ENCODE measurements at regions of chr10 and their contacts with region 1.

Region 1: DNA sequence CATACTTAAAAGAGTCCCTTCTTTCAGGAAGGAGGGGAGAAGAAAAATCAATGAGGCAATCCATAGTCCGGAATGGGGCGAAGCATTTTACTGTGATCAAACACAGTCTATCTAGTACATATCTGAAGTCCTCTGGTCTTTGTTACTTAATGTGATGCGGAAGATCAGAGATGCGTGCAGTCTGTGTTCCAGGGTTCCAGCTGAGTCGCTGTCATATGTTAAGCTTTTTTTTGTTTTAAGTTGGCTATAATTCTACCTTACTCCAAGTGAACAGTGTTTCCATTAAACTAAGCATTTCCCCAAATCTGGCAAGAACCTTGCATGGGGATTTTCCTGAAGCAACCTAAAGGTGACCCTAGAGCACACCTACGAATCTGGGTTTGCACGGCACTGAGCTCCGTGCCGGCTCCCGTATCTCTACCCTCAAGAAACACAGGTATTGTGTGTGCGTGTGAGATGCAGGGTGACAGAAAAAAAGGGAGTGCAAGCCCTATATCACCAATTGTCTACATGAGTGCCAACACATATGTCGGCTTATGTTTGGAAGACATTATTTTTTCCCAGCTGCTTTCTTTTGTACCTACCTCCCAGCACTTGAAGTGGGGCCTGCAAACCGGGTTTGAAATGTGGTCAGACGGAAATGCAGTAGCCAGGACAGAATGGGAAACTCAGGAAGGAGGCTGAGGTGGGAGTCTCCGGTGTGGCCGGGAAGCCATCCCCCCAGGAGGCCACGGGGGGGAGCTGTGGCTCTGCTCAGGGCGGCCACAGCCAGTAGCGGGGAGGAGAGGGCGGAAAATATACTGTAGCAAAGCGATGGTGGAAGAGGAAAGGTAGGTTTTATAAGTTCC is 435.8 kb upstream of the MGMT start:
- DNase-seq: peak in 13 of 14 experiments; percentile 20 to 76 (median 42)
- ATAC-seq: peak; percentile 45
- H3K4me3 ChIP-seq: no peak overlapping the region
- H3K4me3 Mint-ChIP-seq: no peak overlapping the region
- H3K27ac ChIP-seq: no peak overlapping the region
- H3K27ac Mint-ChIP-seq: no peak overlapping the region
- H3K4me1 ChIP-seq: peaks cover 11% of the 10 kb centered on the region
- H3K4me1 Mint-ChIP-seq: peaks cover 37% of the 10 kb centered on the region
- H3K27me3 ChIP-seq: no peaks in the 10 kb centered on the region
- H3K27me3 Mint-ChIP-seq: peaks cover 28% of the 10 kb centered on the region
- CTCF ChIP-seq: peak; percentile 82

Region 2: DNA sequence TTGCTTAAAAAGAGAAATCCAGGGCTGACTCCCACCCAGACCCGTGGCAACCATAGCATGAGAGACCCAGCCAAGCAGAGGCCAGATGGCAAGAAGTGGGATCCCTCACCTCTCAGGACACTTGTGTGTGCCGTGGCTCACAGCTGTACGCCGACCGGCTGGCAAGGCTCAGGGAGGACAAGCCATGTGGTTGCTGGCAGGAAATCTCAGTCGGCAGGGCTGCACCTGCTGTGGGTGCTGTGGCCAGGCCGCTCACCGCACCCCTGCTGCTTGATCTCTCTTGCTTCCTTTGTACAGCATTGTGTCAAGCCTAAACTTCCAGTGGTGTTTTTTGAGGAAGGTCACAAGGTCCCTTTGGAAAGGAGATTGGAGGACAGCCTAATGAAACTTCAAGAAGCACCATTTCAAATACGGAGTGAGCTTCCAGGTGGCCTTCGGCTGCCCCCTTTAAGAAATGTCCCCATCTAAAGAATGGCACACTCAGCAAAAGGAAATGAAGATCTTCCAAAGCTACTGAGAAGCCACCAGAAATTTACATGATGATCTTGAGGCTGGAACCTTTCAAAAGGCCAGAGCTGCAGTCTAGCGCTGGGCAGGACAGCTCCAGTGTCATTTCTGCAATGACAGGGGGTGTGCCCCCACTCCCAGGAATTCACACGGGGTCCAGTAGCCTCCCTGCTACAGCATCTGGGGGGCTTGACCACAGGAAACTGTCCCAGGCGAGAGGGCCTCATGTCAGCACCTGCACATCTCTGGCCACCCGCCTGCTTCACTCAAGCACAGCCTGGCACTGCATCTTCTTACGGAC is 26.8 kb after region 1 on chr10:
- CTCF ChIA-PET with region 1: no interaction called
- POLR2A ChIA-PET with region 1: interaction called, 18 read pairs
- intact Hi-C with region 1: no loop called
- DNase-seq: peak in 11 of 14 experiments; percentile 14 to 71 (median 49)
- ATAC-seq: peak; percentile 90
- H3K4me3 ChIP-seq: no peak overlapping the region
- H3K4me3 Mint-ChIP-seq: peak overlapping the region; percentile 64
- H3K27ac ChIP-seq: no peak overlapping the region
- H3K27ac Mint-ChIP-seq: peak overlapping the region; percentile 65
- H3K4me1 ChIP-seq: peaks cover 32% of the 10 kb centered on the region
- H3K4me1 Mint-ChIP-seq: peaks cover 40% of the 10 kb centered on the region
- H3K27me3 ChIP-seq: no peaks in the 10 kb centered on the region
- H3K27me3 Mint-ChIP-seq: no peaks in the 10 kb centered on the region
- CTCF ChIP-seq: no peak

Region 3: DNA sequence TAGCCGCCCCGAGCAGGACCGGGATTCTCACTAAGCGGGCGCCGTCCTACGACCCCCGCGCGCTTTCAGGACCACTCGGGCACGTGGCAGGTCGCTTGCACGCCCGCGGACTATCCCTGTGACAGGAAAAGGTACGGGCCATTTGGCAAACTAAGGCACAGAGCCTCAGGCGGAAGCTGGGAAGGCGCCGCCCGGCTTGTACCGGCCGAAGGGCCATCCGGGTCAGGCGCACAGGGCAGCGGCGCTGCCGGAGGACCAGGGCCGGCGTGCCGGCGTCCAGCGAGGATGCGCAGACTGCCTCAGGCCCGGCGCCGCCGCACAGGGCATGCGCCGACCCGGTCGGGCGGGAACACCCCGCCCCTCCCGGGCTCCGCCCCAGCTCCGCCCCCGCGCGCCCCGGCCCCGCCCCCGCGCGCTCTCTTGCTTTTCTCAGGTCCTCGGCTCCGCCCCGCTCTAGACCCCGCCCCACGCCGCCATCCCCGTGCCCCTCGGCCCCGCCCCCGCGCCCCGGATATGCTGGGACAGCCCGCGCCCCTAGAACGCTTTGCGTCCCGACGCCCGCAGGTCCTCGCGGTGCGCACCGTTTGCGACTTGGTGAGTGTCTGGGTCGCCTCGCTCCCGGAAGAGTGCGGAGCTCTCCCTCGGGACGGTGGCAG is 435.6 kb after region 1 on chr10 and contains the start of gene MGMT:
- CTCF ChIA-PET with region 1: no interaction called
- POLR2A ChIA-PET with region 1: interaction called, 7 read pairs
- intact Hi-C with region 1: loop called in 1 of 2 experiments (anchors 10 kb)
- DNase-seq: peak; percentile 95 to 100 (median 99)
- ATAC-seq: peak; percentile 98
- H3K4me3 ChIP-seq: peak within 1 kb of the TSS; percentile 78
- H3K4me3 Mint-ChIP-seq: peak within 1 kb of the TSS; percentile 93
- H3K27ac ChIP-seq: peak within 1 kb of the TSS; percentile 58
- H3K27ac Mint-ChIP-seq: peak within 1 kb of the TSS; percentile 90
- H3K4me1 ChIP-seq: peaks cover 21% of the 10 kb centered on the region
- H3K4me1 Mint-ChIP-seq: peaks cover 22% of the 10 kb centered on the region
- H3K27me3 ChIP-seq: no peaks in the 10 kb centered on the region
- H3K27me3 Mint-ChIP-seq: no peaks in the 10 kb centered on the region
- CTCF ChIP-seq: no peak
- total RNA-seq, gene MGMT: 9.0 to 9.6 TPM

Region 4: GRCh38 chr10:129971381-129972144 is 940.3 kb after region 1 on chr10:
- CTCF ChIA-PET with region 1: no interaction called
- POLR2A ChIA-PET with region 1: no interaction called
- intact Hi-C with region 1: loop called (anchors 1 to 5 kb)
- DNase-seq: peak in 5 of 14 experiments; percentile 10 to 68 (median 35)
- ATAC-seq: peak; percentile 64
- H3K4me3 ChIP-seq: no peak overlapping the region
- H3K4me3 Mint-ChIP-seq: no peak overlapping the region
- H3K27ac ChIP-seq: no peak overlapping the region
- H3K27ac Mint-ChIP-seq: no peak overlapping the region
- H3K4me1 ChIP-seq: peaks cover 25% of the 10 kb centered on the region
- H3K4me1 Mint-ChIP-seq: peaks cover 13% of the 10 kb centered on the region
- H3K27me3 ChIP-seq: peaks cover 65 to 87% of the 10 kb centered on the region in 2 experiments
- H3K27me3 Mint-ChIP-seq: peaks cover 75% of the 10 kb centered on the region
- CTCF ChIP-seq: no peak

Region 5: GRCh38 chr10:130179640-130180039 is 1148.4 kb after region 1 on chr10:
- CTCF ChIA-PET with region 1: no interaction called
- POLR2A ChIA-PET with region 1: no interaction called
- intact Hi-C with region 1: loop called in 1 of 2 experiments (anchors 1 kb)
- DNase-seq: peak in 9 of 14 experiments; percentile 17 to 68 (median 31)
- ATAC-seq: peak; percentile 98
- H3K4me3 ChIP-seq: no peak overlapping the region
- H3K4me3 Mint-ChIP-seq: no peak overlapping the region
- H3K27ac ChIP-seq: no peak overlapping the region
- H3K27ac Mint-ChIP-seq: peak overlapping the region; percentile 13
- H3K4me1 ChIP-seq: no peaks in the 10 kb centered on the region
- H3K4me1 Mint-ChIP-seq: peaks cover 22% of the 10 kb centered on the region
- H3K27me3 ChIP-seq: no peaks in the 10 kb centered on the region
- H3K27me3 Mint-ChIP-seq: no peaks in the 10 kb centered on the region
- CTCF ChIP-seq: peak; percentile 56